Endothelial cell of umbilical vein (primary cell): ENCODE measurements at regions of chr17 and their contacts with region 1.

Region 1: DNA sequence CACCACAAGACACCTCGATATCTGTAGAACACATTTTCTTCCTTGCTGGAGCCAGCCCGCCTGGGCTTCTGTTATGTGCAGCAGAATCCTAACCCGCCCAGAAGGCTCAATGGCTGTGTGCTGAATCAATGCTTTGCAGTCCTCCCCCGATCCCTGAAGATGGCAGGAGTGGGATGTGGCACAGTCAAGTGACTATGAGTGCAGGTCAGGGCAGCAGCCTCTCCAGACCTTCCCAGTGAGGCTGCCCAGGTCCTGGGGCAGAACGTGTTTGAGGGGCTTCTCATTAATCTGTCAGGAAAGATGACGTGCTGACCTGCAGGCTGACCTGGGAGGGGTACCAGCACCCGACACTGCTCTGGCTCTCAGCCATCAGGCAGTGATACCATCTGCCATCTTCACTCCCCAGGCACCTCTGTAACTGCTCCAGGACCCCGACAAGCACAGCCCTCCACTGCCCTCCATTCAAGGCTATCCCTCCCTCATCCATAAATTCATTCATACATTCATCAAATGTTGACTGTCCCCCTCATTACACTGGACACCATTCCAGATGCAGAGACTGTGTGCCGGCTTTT is 35.2 kb downstream of the LRRC75A start:
- DNase-seq: no peak
- H3K4me3 ChIP-seq: no peak overlapping the region
- H3K27ac ChIP-seq: no peak overlapping the region
- H3K4me1 ChIP-seq: peaks cover 10% of the 10 kb centered on the region
- H3K27me3 ChIP-seq: no peaks in the 10 kb centered on the region
- CTCF ChIP-seq: no peak
- POLR2A ChIP-seq: no peak

Region 2: GRCh38 chr17:16380640-16381495 is 76.0 kb before region 1 on chr17 and contains the start of gene UBB:
- CTCF ChIA-PET with region 1: interaction called, 4 read pairs
- POLR2A ChIA-PET with region 1: interaction called, 3 read pairs
- dilution Hi-C with region 1: no loop called
- intact Hi-C with region 1: loop called (anchors 2 kb)
- DNase-seq: peak; percentile 98
- H3K4me3 ChIP-seq: peak within 1 kb of the TSS; percentile 65 to 90 (median 88)
- H3K27ac ChIP-seq: peak within 1 kb of the TSS; percentile 97
- H3K4me1 ChIP-seq: peaks cover 4% of the 10 kb centered on the region
- H3K27me3 ChIP-seq: no peaks in the 10 kb centered on the region
- CTCF ChIP-seq: peak in 1 of 2 donors; percentile 22
- POLR2A ChIP-seq: peak; percentile 100
- total RNA-seq, gene UBB: 1,183 and 1,294 TPM in 2 replicates

Region 3: DNA sequence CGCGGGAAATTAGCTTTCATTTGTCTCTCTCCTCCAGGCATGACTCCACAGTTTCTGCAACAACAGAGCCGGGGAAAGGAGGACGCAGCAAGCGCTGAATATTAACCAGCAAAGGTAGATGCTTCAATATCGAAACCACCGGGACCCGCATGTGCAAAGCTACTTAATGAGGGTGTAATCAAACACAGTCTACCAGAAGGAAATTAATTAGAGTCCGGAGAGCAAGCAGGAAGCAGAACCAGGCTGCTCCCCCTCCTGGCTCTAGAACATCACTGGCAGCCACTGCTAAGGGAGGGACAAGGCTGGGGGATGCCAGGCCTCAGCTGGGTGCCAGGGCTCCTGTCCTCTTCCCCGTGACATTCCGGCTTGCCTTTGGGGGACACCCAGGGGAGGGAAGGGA is 13.4 kb after region 1 on chr17:
- CTCF ChIA-PET with region 1: interaction called, 43 read pairs
- POLR2A ChIA-PET with region 1: no interaction called
- dilution Hi-C with region 1: no loop called
- intact Hi-C with region 1: no loop called
- DNase-seq: peak; percentile 33
- H3K4me3 ChIP-seq: no peak overlapping the region
- H3K27ac ChIP-seq: no peak overlapping the region
- H3K4me1 ChIP-seq: peaks cover 20% of the 10 kb centered on the region
- H3K27me3 ChIP-seq: no peaks in the 10 kb centered on the region
- CTCF ChIP-seq: peak in 1 of 2 donors; percentile 36
- POLR2A ChIP-seq: no peak

Region 4: DNA sequence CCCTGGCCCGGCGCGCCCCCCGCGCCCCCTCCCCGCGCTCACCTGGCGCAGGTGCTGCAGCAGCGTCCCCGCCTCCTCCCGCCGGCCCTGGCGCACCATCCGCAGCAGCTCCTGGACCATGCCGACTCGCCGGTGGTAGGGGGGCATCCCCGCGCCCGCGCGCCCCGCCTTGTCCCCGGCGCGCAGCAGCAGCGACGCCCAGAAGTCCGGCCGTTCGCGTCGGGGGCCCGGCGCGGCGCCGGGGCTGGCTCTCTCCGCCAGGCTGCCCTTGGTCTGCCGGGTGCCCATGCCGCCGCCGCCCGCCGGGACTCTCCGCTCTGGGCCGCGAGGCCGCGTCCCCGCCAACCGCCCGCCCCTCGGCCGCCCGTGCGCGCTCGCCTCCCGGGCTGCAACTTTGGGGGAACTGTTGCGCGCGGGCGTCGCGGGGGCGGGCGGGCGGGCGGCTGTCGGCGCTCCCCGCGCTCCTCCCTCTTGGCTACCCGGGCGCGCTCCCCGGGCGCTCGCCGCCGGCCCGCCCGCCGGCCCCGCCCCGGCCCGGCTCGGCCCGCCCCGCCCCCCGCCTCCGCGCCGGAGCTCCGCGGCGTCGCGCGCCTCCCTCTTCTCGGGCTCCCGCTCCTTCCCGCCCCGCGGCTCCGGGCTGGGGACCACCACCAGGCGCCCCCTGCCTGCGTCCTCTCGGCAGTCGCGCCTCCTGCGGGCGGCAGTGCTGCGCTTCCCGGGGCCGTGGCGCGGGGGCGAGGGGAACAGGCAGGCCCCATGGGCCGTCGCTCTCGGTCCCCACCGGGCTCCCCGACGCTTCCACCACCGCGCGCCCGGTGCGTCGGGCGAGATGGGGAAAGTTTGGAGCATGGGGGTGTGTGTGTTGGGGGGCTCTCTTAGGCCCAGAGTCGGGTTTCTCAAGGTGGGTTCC is 35.1 kb after region 1 on chr17 and contains the start of gene LRRC75A:
- CTCF ChIA-PET with region 1: interaction called, 20 read pairs
- POLR2A ChIA-PET with region 1: no interaction called
- dilution Hi-C with region 1: no loop called
- intact Hi-C with region 1: no loop called
- DNase-seq: peak; percentile 33
- H3K4me3 ChIP-seq: peak within 1 kb of the TSS; percentile 8 to 47 (median 14)
- H3K27ac ChIP-seq: no peak within 1 kb of the TSS
- H3K4me1 ChIP-seq: peaks cover 15% of the 10 kb centered on the region
- H3K27me3 ChIP-seq: peaks cover 24 to 33% of the 10 kb centered on the region in 2 experiments
- CTCF ChIP-seq: peak in 1 of 2 donors; percentile 27
- POLR2A ChIP-seq: no peak
- total RNA-seq, gene LRRC75A: 2.9 and 3.7 TPM in 2 replicates

Region 5: GRCh38 chr17:16529906-16530305 is 73.1 kb after region 1 on chr17:
- CTCF ChIA-PET with region 1: interaction called, 440 read pairs
- POLR2A ChIA-PET with region 1: no interaction called
- dilution Hi-C with region 1: no loop called
- intact Hi-C with region 1: no loop called
- DNase-seq: no peak
- H3K4me3 ChIP-seq: no peak overlapping the region
- H3K27ac ChIP-seq: no peak overlapping the region
- H3K4me1 ChIP-seq: no peaks in the 10 kb centered on the region
- H3K27me3 ChIP-seq: peaks cover 26 to 28% of the 10 kb centered on the region in 2 experiments
- CTCF ChIP-seq: no peak
- POLR2A ChIP-seq: no peak

Region 6: DNA sequence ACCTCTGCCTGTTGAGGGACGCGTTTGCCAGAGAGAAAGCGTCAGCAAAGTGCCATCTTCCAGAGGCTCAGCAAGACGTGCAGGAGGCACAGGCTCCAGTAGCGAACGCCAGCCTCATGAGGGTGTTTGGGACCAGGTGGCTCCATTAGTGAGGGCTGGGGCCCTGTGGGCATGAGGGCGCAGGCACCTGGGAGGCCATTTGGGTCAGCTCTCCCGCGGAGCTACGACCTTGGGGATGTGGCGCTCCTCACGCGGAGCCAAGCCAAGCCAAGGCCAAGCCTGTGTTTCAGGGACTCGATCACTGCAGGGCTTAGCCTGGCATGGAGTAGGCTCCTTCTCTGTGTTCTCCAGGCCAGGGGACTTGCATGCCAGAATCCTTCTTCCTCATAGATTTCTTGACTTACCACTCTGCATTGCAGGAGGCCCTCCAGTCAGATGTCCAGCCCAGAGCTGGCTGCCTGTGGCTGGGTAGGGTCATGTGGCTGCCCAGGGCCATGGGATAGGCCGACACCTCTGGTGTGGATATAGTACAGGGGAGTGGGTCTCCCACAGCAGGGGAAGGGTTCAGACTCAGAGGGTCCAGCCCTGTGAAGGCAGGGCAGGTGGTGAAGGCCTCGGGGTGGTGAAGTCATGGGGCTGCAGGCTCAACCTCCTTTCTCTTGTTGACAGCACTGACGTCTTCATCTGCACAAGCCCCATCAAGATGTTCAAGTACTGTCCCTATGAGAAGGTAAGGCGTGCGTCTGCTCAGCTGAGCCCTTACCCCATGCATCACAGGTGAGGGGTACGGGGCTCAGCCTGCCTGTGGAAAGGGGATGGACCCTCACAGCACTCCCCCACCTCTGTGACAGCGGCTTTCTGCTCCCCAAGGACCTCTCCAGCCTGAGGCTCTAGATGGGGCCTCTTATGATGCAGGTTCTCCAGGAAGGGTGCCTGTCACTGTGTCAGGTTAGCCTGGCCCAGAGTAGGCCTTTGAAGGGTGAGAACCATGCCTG is 866.0 kb after region 1 on chr17:
- CTCF ChIA-PET with region 1: no interaction called
- POLR2A ChIA-PET with region 1: no interaction called
- dilution Hi-C with region 1: no loop called
- intact Hi-C with region 1: no loop called
- DNase-seq: no peak
- H3K4me3 ChIP-seq: no peak overlapping the region
- H3K27ac ChIP-seq: no peak overlapping the region
- H3K4me1 ChIP-seq: no peaks in the 10 kb centered on the region
- H3K27me3 ChIP-seq: no peaks in the 10 kb centered on the region
- CTCF ChIP-seq: no peak
- POLR2A ChIP-seq: no peak